Activated CD4-positive, alpha-beta memory T cell treated with anti-CD3 and anti-CD28 coated beads for 36 hours (primary cell): ENCODE measurements at regions of chr6 and their contacts with region 1.

Region 1: GRCh38 chr6:129498950-129499842 is 210.8 kb downstream of the ARHGAP18 start:
- DNase-seq: no peak
- H3K4me3 Mint-ChIP-seq: peak overlapping the region; percentile 46
- H3K27ac Mint-ChIP-seq: peak overlapping the region; percentile 50
- H3K4me1 Mint-ChIP-seq: peaks cover 55% of the 10 kb centered on the region
- H3K27me3 Mint-ChIP-seq: no peaks in the 10 kb centered on the region

Region 2: DNA sequence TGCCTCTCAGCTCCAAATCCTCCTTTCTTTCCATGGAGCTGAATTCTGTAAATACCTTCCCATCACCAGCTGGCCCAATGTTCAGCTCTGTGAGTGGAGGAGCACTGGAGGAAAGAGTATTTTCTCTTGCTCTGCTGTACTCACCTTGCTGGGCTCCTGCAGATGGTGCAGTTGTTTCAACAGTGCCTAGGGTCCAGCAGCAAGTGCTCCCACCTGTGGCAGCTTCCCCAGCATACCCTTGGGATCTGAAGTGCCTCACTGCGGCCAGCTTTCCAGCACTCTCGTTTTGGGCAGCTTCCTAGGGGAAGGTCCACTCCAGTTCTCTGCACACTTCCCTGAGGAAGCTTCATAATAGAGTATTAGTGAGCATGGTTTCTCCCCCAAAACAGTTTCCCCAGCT is 39.8 kb after region 1 on chr6:
- CTCF ChIA-PET with region 1: no interaction called
- POLR2A ChIA-PET with region 1: no interaction called
- intact Hi-C with region 1: no loop called
- DNase-seq: no peak
- H3K4me3 Mint-ChIP-seq: no peak overlapping the region
- H3K27ac Mint-ChIP-seq: no peak overlapping the region
- H3K4me1 Mint-ChIP-seq: no peaks in the 10 kb centered on the region
- H3K27me3 Mint-ChIP-seq: peaks cover 2% of the 10 kb centered on the region

Region 3: DNA sequence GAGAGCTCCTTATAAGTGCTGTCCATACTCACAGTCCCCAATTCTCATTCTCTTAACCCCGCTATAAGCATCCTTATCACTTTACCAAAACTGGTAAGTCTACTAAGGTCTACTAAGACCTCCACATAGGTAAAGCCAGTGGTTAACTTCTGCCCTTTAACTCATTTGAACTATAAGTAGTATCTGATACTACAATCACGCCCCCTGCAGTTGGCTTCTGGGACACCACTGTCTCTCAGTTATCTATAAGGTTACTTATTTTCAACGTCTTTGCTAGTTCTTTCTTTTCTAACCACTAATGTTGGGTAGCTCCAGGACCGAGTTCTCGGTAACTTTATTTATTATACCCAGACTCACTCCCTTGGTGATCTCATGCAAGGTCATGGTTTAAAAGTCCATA is 68.2 kb after region 1 on chr6:
- CTCF ChIA-PET with region 1: interaction called, 55 read pairs
- POLR2A ChIA-PET with region 1: no interaction called
- intact Hi-C with region 1: loop called (anchors 1 kb)
- DNase-seq: peak; percentile 54
- H3K4me3 Mint-ChIP-seq: no peak overlapping the region
- H3K27ac Mint-ChIP-seq: no peak overlapping the region
- H3K4me1 Mint-ChIP-seq: no peaks in the 10 kb centered on the region
- H3K27me3 Mint-ChIP-seq: no peaks in the 10 kb centered on the region

Region 4: DNA sequence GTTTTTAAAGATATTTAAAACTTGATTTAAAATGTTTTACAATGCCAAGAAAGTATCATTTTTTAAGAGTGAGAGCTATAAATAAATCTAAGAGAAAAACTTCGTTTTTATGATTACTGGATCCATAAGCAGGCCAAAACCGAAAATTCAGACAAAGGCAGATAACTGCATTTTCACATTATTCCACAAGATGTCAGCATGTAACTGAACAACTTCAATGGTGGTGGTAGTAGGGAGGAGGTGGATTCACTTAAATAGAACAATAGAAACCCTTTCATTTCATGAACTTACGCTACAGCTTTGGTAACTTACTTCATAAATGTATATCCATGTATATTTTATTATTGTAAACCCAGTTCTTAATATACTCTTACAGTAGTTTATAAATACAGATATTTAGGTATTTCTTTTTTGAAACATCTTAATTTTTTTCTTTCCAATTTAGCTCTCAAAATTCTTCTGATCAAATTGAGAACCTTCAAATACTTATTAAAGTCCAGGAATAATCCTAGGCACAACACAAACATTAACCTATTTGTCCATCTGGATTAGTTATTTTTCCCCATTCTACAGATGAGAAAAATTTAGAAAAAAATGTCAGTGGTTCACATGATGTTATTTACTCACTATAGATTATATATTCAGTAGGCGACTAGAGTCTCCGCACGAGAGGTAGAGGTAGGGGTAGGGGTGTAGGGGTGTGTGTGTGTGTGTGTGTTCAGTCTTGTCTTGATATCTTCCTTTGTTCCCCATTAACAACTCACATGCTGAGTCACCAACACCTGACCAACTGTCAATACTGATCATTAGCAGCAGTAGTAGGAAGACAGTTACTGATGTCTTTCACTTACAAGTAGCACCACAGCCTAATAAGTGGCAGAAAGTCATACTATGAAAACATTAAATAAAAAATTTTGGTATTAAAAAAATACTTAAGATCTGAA is 99.3 kb after region 1 on chr6:
- CTCF ChIA-PET with region 1: interaction called, 33 read pairs
- POLR2A ChIA-PET with region 1: no interaction called
- intact Hi-C with region 1: loop called (anchors 1 kb)
- DNase-seq: no peak
- H3K4me3 Mint-ChIP-seq: no peak overlapping the region
- H3K27ac Mint-ChIP-seq: no peak overlapping the region
- H3K4me1 Mint-ChIP-seq: no peaks in the 10 kb centered on the region
- H3K27me3 Mint-ChIP-seq: no peaks in the 10 kb centered on the region

Region 5: GRCh38 chr6:129748212-129748900 is 249.2 kb after region 1 on chr6:
- CTCF ChIA-PET with region 1: interaction called, 6 read pairs
- POLR2A ChIA-PET with region 1: no interaction called
- intact Hi-C with region 1: loop called (anchors 1 kb)
- DNase-seq: peak; percentile 70
- H3K4me3 Mint-ChIP-seq: peak overlapping the region; percentile 63
- H3K27ac Mint-ChIP-seq: peak overlapping the region; percentile 91
- H3K4me1 Mint-ChIP-seq: peaks cover 60% of the 10 kb centered on the region
- H3K27me3 Mint-ChIP-seq: no peaks in the 10 kb centered on the region

Region 6: DNA sequence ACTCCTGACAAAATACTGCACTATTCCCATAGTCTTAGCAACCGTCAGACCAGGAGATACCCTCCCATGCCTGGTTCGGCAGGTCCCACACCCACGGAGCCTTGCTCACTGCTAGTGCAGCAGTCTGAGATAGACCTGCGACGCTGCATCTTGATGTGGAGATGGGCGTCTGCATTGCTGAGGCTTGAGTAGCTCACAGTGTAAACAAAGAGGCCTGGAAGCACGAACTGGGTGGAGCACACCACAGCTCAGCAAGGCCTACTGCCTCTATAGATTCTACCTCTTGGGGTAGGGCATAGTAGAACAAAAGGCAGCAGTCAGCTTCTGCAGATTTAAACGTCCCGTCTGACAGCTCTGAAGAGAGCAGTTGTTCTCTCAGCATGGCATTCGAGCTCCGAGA is 336.5 kb after region 1 on chr6:
- CTCF ChIA-PET with region 1: no interaction called
- POLR2A ChIA-PET with region 1: no interaction called
- intact Hi-C with region 1: no loop called
- DNase-seq: no peak
- H3K4me3 Mint-ChIP-seq: no peak overlapping the region
- H3K27ac Mint-ChIP-seq: no peak overlapping the region
- H3K4me1 Mint-ChIP-seq: no peaks in the 10 kb centered on the region
- H3K27me3 Mint-ChIP-seq: peaks cover 5% of the 10 kb centered on the region

Region 7: GRCh38 chr6:129936329-129937165 is 437.4 kb after region 1 on chr6:
- CTCF ChIA-PET with region 1: interaction called, 4 read pairs
- POLR2A ChIA-PET with region 1: no interaction called
- intact Hi-C with region 1: loop called (anchors 2 kb)
- DNase-seq: peak; percentile 44
- H3K4me3 Mint-ChIP-seq: no peak overlapping the region
- H3K27ac Mint-ChIP-seq: no peak overlapping the region
- H3K4me1 Mint-ChIP-seq: no peaks in the 10 kb centered on the region
- H3K27me3 Mint-ChIP-seq: peaks cover 12% of the 10 kb centered on the region